ENCODE measurements at regions of chr5 and their contacts with region 1.

Region 1: GRCh38 chr5:128201065-128201926 is 117.7 kb downstream of the SLC12A2 start:
- DNase-seq: peak; percentile 53 to 71
- ATAC-seq: peak; percentile 14 to 45
- H3K4me3 ChIP-seq: peak overlapping the region in 3 of 4 donors; percentile 24 to 50 (median 41)
- H3K27ac ChIP-seq: peak overlapping the region in 2 of 4 donors; percentile 87 to 88
- H3K4me1 ChIP-seq: peaks cover 34 to 39% of the 10 kb centered on the region in 2 donors
- H3K27me3 ChIP-seq: no peaks in the 10 kb centered on the region
- CTCF ChIP-seq: peak; percentile 75 to 93 (median 88)
- POLR2A ChIP-seq: no peak

Region 2: DNA sequence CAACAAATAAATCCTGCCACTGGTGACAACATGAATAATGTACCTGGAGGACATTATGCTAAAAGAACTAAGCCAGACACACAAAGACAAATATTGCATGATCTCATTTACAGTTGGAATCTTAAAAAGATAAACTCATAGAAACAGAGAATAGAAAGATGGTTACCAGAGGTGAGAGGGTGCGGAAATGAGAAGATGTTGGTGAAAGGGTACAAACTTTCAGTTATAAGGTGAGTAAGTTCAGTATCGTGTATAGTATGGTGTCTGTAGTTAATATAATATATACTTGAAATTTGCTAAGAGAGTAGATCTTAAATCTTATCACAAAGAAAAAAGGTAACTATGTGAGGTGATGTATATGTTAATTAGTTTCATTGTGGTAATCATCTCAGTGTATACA is 620.6 kb before region 1 on chr5:
- in situ Hi-C with region 1: no loop called
- intact Hi-C with region 1: loop called (anchors 5 kb)
- DNase-seq: no peak
- ATAC-seq: no peak
- H3K4me3 ChIP-seq: no peak overlapping the region
- H3K27ac ChIP-seq: no peak overlapping the region
- H3K4me1 ChIP-seq: peaks cover 8% of the 10 kb centered on the region in 2 donors
- H3K27me3 ChIP-seq: no peaks in the 10 kb centered on the region
- CTCF ChIP-seq: no peak
- POLR2A ChIP-seq: no peak

Region 3: GRCh38 chr5:127757576-127757975 is 443.7 kb before region 1 on chr5:
- in situ Hi-C with region 1: loop called in 1 of 4 experiments (anchors 5 kb)
- intact Hi-C with region 1: loop called (anchors 5 kb)
- DNase-seq: peak in 1 of 2 donors; percentile 25
- ATAC-seq: peak; percentile 90 to 93
- H3K4me3 ChIP-seq: no peak overlapping the region
- H3K27ac ChIP-seq: no peak overlapping the region
- H3K4me1 ChIP-seq: peaks cover 4 to 19% of the 10 kb centered on the region in 2 donors
- H3K27me3 ChIP-seq: no peaks in the 10 kb centered on the region
- CTCF ChIP-seq: peak in 4 of 5 experiments; percentile 35 to 54 (median 46)
- POLR2A ChIP-seq: no peak

Region 4: GRCh38 chr5:128083033-128083810 is 118.1 kb before region 1 on chr5 and contains the start of gene SLC12A2:
- in situ Hi-C with region 1: no loop called
- intact Hi-C with region 1: loop called (anchors 2 kb)
- DNase-seq: peak; percentile 90 to 91
- ATAC-seq: peak; percentile 80 to 81
- H3K4me3 ChIP-seq: peak within 1 kb of the TSS; percentile 79 to 88 (median 84)
- H3K27ac ChIP-seq: peak within 1 kb of the TSS; percentile 93 to 99 (median 99)
- H3K4me1 ChIP-seq: peaks cover 40 to 61% of the 10 kb centered on the region in 2 donors
- H3K27me3 ChIP-seq: no peaks in the 10 kb centered on the region
- CTCF ChIP-seq: peak in 1 of 5 experiments; percentile 8
- POLR2A ChIP-seq: peak; percentile 88 to 97
- total RNA-seq, gene SLC12A2: 11.6 to 21.0 (median 17.2) TPM

Region 5: DNA sequence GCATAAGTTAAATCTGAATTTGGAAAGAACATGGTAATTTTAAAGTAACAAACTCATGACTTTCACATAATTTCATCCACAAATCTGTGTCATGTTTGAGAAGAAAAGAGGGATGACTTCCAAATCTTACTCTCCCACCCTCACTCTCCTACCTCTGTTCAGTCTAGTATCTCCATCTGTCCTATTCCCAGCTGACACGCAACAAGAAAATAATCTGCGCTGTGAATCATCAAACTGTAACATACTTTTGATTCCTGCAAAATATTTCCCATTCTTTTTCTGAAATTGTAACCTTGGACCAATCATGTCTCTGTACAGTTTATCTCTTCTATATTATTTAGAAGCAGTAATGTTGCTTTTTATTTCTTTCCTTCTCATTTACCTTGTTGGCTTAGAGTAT is 26.3 kb before region 1 on chr5:
- in situ Hi-C with region 1: no loop called
- intact Hi-C with region 1: no loop called
- DNase-seq: no peak
- ATAC-seq: no peak
- H3K4me3 ChIP-seq: no peak overlapping the region
- H3K27ac ChIP-seq: no peak overlapping the region
- H3K4me1 ChIP-seq: no peaks in the 10 kb centered on the region
- H3K27me3 ChIP-seq: no peaks in the 10 kb centered on the region
- CTCF ChIP-seq: no peak
- POLR2A ChIP-seq: no peak

Region 6: GRCh38 chr5:128304088-128304487 is 102.8 kb after region 1 on chr5:
- in situ Hi-C with region 1: no loop called
- intact Hi-C with region 1: no loop called
- DNase-seq: no peak
- ATAC-seq: no peak
- H3K4me3 ChIP-seq: no peak overlapping the region
- H3K27ac ChIP-seq: no peak overlapping the region
- H3K4me1 ChIP-seq: no peaks in the 10 kb centered on the region
- H3K27me3 ChIP-seq: no peaks in the 10 kb centered on the region
- CTCF ChIP-seq: no peak
- POLR2A ChIP-seq: no peak

Region 7: DNA sequence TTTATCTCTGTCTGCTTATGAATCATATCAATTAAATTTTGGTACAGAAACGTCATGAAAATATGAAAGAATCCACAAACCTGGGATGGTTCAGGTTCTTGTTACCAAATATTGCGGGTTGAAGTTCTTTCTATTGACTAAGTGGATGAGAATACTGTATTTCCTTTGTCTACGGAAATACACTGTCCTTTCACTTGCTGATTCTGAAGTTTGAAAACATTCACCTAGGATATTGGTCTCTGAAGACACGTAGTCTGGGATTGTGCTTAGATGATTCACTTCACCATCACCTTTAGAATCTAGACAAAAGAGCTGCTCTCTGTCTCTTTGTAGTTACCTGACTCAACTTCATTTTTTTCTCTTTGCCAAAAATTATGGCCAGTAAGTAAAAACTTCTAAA is 114.4 kb after region 1 on chr5:
- in situ Hi-C with region 1: no loop called
- intact Hi-C with region 1: no loop called
- DNase-seq: no peak
- ATAC-seq: no peak
- H3K4me3 ChIP-seq: no peak overlapping the region
- H3K27ac ChIP-seq: no peak overlapping the region
- H3K4me1 ChIP-seq: no peaks in the 10 kb centered on the region
- H3K27me3 ChIP-seq: no peaks in the 10 kb centered on the region
- CTCF ChIP-seq: no peak
- POLR2A ChIP-seq: no peak

Region 8: DNA sequence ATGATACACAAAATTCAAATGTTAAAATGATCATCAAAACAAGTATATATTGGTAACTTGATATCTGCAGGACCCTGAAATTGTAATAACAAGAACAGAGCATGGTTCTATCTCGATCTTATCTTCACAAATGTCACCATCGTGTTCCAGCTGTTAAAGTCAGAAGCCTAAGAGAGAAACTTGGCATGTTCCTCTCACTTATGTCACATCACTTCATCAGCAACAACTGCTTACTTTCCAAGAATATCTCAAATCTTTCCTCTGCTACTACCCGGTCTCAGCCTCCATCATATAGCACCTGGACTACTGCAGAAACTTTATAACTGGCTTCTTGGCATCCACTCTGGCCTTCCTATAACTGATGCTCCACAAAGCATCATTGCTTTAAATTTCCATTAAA is 251.8 kb after region 1 on chr5:
- in situ Hi-C with region 1: no loop called
- intact Hi-C with region 1: no loop called
- DNase-seq: no peak
- ATAC-seq: no peak
- H3K4me3 ChIP-seq: no peak overlapping the region
- H3K27ac ChIP-seq: no peak overlapping the region
- H3K4me1 ChIP-seq: no peaks in the 10 kb centered on the region
- H3K27me3 ChIP-seq: peaks cover 0 to 3% (median 0%) of the 10 kb centered on the region in 3 donors
- CTCF ChIP-seq: no peak
- POLR2A ChIP-seq: no peak

Region 9: GRCh38 chr5:128844354-128844923 is 643.1 kb after region 1 on chr5:
- in situ Hi-C with region 1: loop called in 3 of 4 experiments (anchors 25 kb)
- intact Hi-C with region 1: no loop called
- DNase-seq: no peak
- ATAC-seq: no peak
- H3K4me3 ChIP-seq: no peak overlapping the region
- H3K27ac ChIP-seq: no peak overlapping the region
- H3K4me1 ChIP-seq: no peaks in the 10 kb centered on the region
- H3K27me3 ChIP-seq: no peaks in the 10 kb centered on the region
- CTCF ChIP-seq: peak in 1 of 5 experiments; percentile 30
- POLR2A ChIP-seq: no peak

Measured in gastrocnemius medialis (tissue), 4 donors.